Sciatic nerve (tissue), 2 donors: ENCODE measurements at regions of chr7 and their contacts with region 1.

Region 1: GRCh38 chr7:101287032-101287431 is 34.6 kb downstream of the IFT22 start:
- DNase-seq: no peak
- ATAC-seq: no peak

Region 2: GRCh38 chr7:100101016-100101862 is 1185.8 kb before region 1 on chr7 and contains the starts of genes AP4M1 and MCM7:
- intact Hi-C with region 1: no loop called
- DNase-seq: peak; percentile 99
- ATAC-seq: peak; percentile 97
- total RNA-seq, gene AP4M1: 19.5 TPM
- total RNA-seq, gene MCM7: 42.4 TPM

Region 3: GRCh38 chr7:101140339-101140699 is 146.7 kb before region 1 on chr7:
- intact Hi-C with region 1: loop called (anchors 5 kb)
- DNase-seq: no peak
- ATAC-seq: no peak